Uterus (tissue), 4 donors: ENCODE measurements at regions of chr1 and their contacts with region 1.

Region 1: DNA sequence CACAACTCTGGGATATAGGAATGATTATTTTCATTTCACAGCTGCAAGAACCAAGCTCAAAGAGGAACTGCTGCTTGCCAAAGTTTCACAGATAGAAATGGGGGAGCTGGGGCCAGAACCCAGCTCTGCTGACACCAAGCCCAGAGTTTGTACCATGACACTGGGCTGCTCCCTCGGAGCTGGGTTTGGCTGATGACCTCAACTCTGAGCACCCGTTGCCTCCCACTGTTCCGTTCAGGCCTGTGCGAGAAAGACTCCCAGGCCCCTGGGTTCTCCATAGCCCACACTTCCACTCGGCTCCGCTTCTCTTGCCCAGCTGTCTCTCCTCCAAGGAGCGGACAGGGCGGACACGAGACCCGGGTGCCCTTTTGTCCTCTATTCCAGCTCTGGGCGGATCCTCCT is 55.2 kb downstream of the NGF start:
- DNase-seq: peak; percentile 90 to 91
- H3K4me3 ChIP-seq: no peak overlapping the region
- H3K27ac ChIP-seq: peak overlapping the region; percentile 93 to 94
- H3K4me1 ChIP-seq: peaks cover 5 to 23% of the 10 kb centered on the region in 2 donors
- H3K27me3 ChIP-seq: no peaks in the 10 kb centered on the region
- CTCF ChIP-seq: no peak
- POLR2A ChIP-seq: peak; percentile 13 to 21

Region 2: GRCh38 chr1:115337633-115338456 is 55.0 kb after region 1 on chr1 and contains the start of gene NGF:
- intact Hi-C with region 1: loop called (anchors 10 kb)
- DNase-seq: peak; percentile 80
- H3K4me3 ChIP-seq: peak within 1 kb of the TSS; percentile 74 to 76
- H3K27ac ChIP-seq: peak within 1 kb of the TSS; percentile 90 to 92
- H3K4me1 ChIP-seq: peaks cover 0 to 1% of the 10 kb centered on the region in 2 donors
- H3K27me3 ChIP-seq: no peaks in the 10 kb centered on the region
- CTCF ChIP-seq: no peak
- POLR2A ChIP-seq: peak; percentile 22 to 65
- total RNA-seq, gene NGF: 1.3 to 21.4 (median 13.5) TPM

Region 3: DNA sequence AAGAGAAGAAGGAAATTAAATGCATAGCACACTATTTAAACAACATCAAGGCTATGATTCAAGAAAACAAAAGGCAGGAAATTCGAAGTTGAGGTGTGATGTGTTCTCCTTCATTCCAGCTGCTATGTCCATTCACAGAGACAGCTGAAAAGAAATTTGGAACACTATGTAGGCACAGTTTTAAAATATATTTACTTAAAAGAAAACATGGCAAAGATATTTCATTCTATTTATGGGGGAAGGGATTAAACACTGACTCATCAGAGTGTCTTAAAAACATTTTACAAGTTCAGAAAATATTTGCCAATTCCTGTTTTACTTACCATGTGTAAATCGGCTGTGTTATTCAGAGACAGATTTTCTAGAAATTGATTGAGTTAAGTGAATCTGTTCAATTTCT is 94.6 kb after region 1 on chr1:
- intact Hi-C with region 1: no loop called
- DNase-seq: no peak
- H3K4me3 ChIP-seq: no peak overlapping the region
- H3K27ac ChIP-seq: no peak overlapping the region
- H3K4me1 ChIP-seq: peaks cover 0 to 3% of the 10 kb centered on the region in 2 donors
- H3K27me3 ChIP-seq: no peaks in the 10 kb centered on the region
- CTCF ChIP-seq: no peak
- POLR2A ChIP-seq: no peak